Caco-2 (cell line): ENCODE measurements at regions of chr13 and their contacts with region 1.

Region 1: GRCh38 chr13:92390217-92390616 is 836.4 kb upstream of the GPC6 start:
- DNase-seq: peak in 1 of 2 experiments; percentile 18
- H3K4me3 ChIP-seq: no peak overlapping the region
- H3K4me3 Mint-ChIP-seq: no peak overlapping the region
- H3K27ac Mint-ChIP-seq: no peak overlapping the region
- H3K4me1 ChIP-seq: no peaks in the 10 kb centered on the region
- H3K4me1 Mint-ChIP-seq: no peaks in the 10 kb centered on the region
- H3K27me3 ChIP-seq: no peaks in the 10 kb centered on the region
- H3K27me3 Mint-ChIP-seq: no peaks in the 10 kb centered on the region
- CTCF ChIP-seq: no peak

Region 2: GRCh38 chr13:92362717-92363116 is 27.5 kb before region 1 on chr13:
- CTCF ChIA-PET with region 1: no interaction called
- POLR2A ChIA-PET with region 1: no interaction called
- intact Hi-C with region 1: no loop called
- DNase-seq: no peak
- H3K4me3 ChIP-seq: no peak overlapping the region
- H3K4me3 Mint-ChIP-seq: no peak overlapping the region
- H3K27ac Mint-ChIP-seq: no peak overlapping the region
- H3K4me1 ChIP-seq: 0 out of 2 replicates have a peak, but pooled peaks cover 7% of the 10 kb centered on the region
- H3K4me1 Mint-ChIP-seq: no peaks in the 10 kb centered on the region
- H3K27me3 ChIP-seq: no peaks in the 10 kb centered on the region
- H3K27me3 Mint-ChIP-seq: no peaks in the 10 kb centered on the region
- CTCF ChIP-seq: no peak

Region 3: GRCh38 chr13:92412996-92413395 is 22.8 kb after region 1 on chr13:
- CTCF ChIA-PET with region 1: no interaction called
- POLR2A ChIA-PET with region 1: no interaction called
- intact Hi-C with region 1: loop called (anchors 1 kb)
- DNase-seq: no peak
- H3K4me3 ChIP-seq: no peak overlapping the region
- H3K4me3 Mint-ChIP-seq: no peak overlapping the region
- H3K27ac Mint-ChIP-seq: no peak overlapping the region
- H3K4me1 ChIP-seq: peaks cover 17% of the 10 kb centered on the region
- H3K4me1 Mint-ChIP-seq: peaks cover 33% of the 10 kb centered on the region
- H3K27me3 ChIP-seq: no peaks in the 10 kb centered on the region
- H3K27me3 Mint-ChIP-seq: no peaks in the 10 kb centered on the region
- CTCF ChIP-seq: no peak